GM10248 (cell line): ENCODE measurements at regions of chr14 and their contacts with region 1.

Region 1: DNA sequence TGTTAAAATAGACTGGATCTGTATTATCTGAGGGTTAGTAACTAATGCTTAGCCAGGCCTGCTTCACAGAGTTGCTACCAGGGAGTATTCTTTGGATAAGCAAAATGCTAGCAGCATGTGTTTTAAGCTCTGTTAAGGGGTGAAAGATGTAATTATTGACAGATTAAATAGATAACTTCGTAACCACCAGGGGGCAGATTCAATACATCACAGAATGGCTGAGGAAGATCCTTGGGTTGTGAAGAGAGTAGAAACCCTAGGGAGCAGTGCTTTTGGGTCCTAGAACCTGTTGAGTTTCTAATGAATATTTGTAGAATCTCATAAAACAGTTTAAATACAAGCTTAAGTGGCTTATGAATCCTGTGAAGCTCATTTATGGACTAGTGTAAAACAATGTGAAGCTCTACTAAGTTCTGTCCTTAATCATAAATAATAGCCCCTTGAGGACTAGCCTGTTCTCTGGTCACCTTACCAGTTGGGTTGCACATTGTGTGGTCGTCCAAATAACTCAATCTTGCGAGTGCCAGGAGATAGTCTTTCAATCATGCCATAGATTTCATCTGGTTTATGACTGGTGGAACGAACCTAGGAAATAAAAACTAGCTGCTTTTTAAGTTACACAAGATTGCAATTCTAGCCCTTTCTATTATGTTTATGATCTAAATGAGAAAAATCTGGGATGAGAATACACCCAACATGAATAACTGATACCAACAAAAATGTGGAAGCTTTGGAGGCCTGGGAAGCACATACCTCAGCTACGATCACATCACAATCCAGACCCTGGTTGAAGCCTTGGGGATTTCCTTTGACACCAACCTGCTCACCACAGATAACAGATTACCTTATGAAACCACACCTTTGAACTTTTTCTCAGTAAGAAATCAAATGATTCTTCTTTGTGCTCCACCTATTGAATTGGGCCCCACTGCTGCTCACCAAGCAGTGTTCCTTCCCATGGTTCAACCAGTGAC is 12.3 kb downstream of the METTL3 start:
- DNase-seq: peak; percentile 44
- CTCF ChIP-seq: peak; percentile 35

Region 2: DNA sequence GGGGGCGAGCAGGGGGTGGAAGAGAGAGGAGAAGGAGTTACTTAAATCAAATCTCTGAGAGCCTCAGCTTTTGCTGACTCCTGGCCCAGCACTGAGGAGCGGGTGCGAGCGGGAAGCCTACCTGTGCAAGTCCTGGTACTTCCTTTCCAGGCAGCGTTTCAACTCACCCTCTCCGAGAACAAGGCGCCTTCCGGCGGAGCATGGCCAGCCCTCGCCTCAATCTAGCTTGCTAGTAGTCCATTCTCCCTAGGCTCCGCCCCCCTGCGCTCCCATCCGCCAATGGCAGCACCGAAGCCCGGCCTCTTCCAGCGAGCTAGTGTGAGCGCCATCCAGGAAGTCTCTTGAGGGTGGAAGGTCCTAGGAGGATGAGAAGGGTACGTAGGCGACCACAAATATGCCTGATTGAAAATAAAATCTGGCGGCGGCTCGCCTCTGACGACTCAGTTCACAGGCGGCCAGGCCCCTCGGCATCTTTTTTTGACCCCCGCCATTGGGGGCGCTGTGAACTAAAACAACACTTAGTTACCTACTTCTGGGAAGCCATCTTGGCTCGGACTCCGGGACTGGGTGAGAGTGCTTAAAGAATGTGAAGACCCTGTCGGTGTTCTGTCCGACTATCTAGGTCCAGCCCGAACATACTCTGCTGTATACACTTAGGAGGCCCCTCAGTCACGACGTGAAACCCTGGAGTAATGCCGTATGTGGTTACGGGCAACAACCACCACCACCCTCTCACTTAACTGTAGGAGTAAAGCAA is 42.8 kb before region 1 on chr14 and contains the start of gene CHD8:
- CTCF ChIA-PET with region 1: interaction called, 11 read pairs
- POLR2A ChIA-PET with region 1: no interaction called
- DNase-seq: peak; percentile 98
- CTCF ChIP-seq: peak; percentile 73

Region 3: GRCh38 chr14:21476925-21477681 is 21.7 kb before region 1 on chr14 and contains the starts of genes RAB2B and TOX4:
- CTCF ChIA-PET with region 1: interaction called, 34 read pairs
- POLR2A ChIA-PET with region 1: interaction called, 3 read pairs
- DNase-seq: peak; percentile 95
- CTCF ChIP-seq: peak; percentile 93

Region 4: DNA sequence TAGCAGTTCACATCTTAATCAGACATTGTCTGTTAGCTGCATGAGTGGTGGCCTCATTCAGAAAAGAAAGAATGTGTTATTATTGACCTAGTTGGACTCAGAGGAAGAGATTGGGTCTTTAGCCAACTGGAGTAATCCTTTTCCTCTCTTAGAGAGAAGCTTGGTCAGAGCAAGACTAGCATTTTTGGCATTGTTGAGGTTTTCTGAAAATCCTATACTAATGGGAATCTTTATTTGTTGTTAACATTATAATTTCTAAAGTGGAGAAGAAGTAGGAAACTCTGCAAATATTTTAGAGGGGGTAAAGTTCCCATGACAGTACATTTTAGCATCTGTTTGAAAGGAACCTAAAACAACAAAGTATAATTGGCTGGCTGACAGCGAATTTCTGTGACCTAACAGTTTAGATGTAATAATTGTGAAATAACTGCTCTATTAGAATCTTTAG is 12.2 kb before region 1 on chr14:
- CTCF ChIA-PET with region 1: interaction called, 23 read pairs
- POLR2A ChIA-PET with region 1: no interaction called
- DNase-seq: no peak
- CTCF ChIP-seq: no peak

Region 5: GRCh38 chr14:21510735-21511657 is 12.2 kb after region 1 on chr14 and contains the start of gene METTL3:
- CTCF ChIA-PET with region 1: interaction called, 48 read pairs
- POLR2A ChIA-PET with region 1: interaction called, 5 read pairs
- DNase-seq: peak; percentile 92
- CTCF ChIP-seq: no peak

Region 6: GRCh38 chr14:21525962-21526671 is 27.3 kb after region 1 on chr14 and contains the start of gene SALL2:
- CTCF ChIA-PET with region 1: interaction called, 31 read pairs
- POLR2A ChIA-PET with region 1: no interaction called
- DNase-seq: peak; percentile 80
- CTCF ChIP-seq: no peak

Region 7: GRCh38 chr14:21557084-21557901 is 58.5 kb after region 1 on chr14:
- CTCF ChIA-PET with region 1: interaction called, 80 read pairs
- POLR2A ChIA-PET with region 1: no interaction called
- DNase-seq: peak; percentile 64
- CTCF ChIP-seq: peak; percentile 58